A549 (cell line): ENCODE measurements at regions of chr13 and their contacts with region 1.

Region 1: DNA sequence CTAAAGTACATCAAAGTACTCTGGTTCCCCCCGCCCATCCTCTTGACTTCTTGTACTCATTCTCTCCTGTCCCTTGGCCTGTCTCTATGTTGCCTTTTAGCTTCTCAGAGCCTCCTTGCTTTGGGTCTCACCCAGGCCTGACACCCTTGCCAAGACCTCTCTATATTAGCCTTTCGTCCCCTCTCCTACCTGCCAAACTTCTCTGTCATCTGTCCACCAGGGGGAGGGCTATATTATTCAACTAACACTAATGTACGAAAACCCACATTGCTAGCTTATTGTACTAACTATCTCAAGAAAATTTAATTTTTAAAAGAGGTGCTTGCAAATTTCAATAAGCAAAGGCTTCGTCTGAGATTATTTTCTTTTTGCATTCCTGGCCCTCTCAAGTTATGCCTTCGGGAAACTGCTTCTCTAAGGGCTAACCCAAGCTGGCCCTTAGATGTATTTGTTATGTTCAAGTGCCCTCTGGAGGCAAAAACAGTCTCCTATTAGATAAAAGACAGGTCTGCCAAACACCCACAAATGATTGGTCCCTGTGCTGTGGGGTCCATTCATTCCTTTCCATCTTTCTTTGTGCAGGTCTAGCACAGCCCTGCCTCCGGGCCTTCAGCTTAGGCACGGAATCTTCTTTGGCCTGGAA is 6.3 kb upstream of the MRPS31 start:
- DNase-seq: peak; percentile 35 to 64
- ATAC-seq: peak; percentile 94 to 97
- H3K4me3 ChIP-seq: peak overlapping the region; percentile 42; the same call in 2 of the 3 replicates
- H3K27ac ChIP-seq: no peak overlapping the region
- H3K4me1 ChIP-seq: no peaks in the 10 kb centered on the region
- CTCF ChIP-seq: peak; percentile 92
- EP300 ChIP-seq: no peak
- POLR2A ChIP-seq: no peak
- RAD21 ChIP-seq: peak; percentile 70 to 74

Region 2: GRCh38 chr13:39684531-39685137 is 1092.7 kb before region 1 on chr13:
- CTCF ChIA-PET with region 1: interaction called, 14 read pairs
- POLR2A ChIA-PET with region 1: no interaction called
- DNase-seq: peak; percentile 3 to 28
- ATAC-seq: peak in 1 of 2 experiments; percentile 57; a peak in 2 of 6 replicates
- H3K4me3 ChIP-seq: no peak overlapping the region
- H3K27ac ChIP-seq: no peak overlapping the region
- H3K4me1 ChIP-seq: peaks cover 3% of the 10 kb centered on the region; the same call in 1 of the 3 replicates
- CTCF ChIP-seq: peak; percentile 34; the same call in 2 of the 3 replicates
- EP300 ChIP-seq: no peak
- POLR2A ChIP-seq: no peak
- RAD21 ChIP-seq: peak; percentile 25 to 44; a peak in 3 of 5 replicates

Region 3: GRCh38 chr13:40377783-40378182 is 399.5 kb before region 1 on chr13:
- CTCF ChIA-PET with region 1: no interaction called
- POLR2A ChIA-PET with region 1: no interaction called
- DNase-seq: no peak
- ATAC-seq: no peak
- H3K4me3 ChIP-seq: no peak overlapping the region
- H3K27ac ChIP-seq: no peak overlapping the region
- H3K4me1 ChIP-seq: no peaks in the 10 kb centered on the region
- CTCF ChIP-seq: no peak
- EP300 ChIP-seq: no peak
- POLR2A ChIP-seq: no peak
- RAD21 ChIP-seq: no peak

Region 4: GRCh38 chr13:40578055-40578454 is 199.2 kb before region 1 on chr13:
- CTCF ChIA-PET with region 1: no interaction called
- POLR2A ChIA-PET with region 1: no interaction called
- DNase-seq: no peak
- ATAC-seq: no peak
- H3K4me3 ChIP-seq: no peak overlapping the region
- H3K27ac ChIP-seq: no peak overlapping the region
- H3K4me1 ChIP-seq: no peaks in the 10 kb centered on the region
- CTCF ChIP-seq: no peak
- EP300 ChIP-seq: no peak
- POLR2A ChIP-seq: no peak
- RAD21 ChIP-seq: no peak

Region 5: DNA sequence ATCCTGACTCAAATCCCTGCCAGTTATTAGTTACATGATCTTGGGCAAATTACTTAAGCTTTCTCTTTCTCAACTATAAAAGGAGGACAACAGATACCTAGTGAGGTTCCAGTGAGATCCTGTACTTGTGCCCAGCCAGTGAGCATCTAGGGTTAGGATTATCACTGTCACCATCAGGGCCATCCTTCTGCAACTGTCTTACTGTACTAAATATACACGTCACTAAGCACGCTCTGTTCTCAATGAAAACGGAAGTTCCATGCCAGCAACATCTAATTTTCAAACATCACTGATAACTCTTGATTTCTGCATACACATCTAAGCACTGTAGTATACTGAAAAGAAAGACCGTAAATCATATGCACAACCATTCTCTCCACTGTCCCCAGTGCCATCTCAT is 180.8 kb before region 1 on chr13:
- CTCF ChIA-PET with region 1: no interaction called
- POLR2A ChIA-PET with region 1: no interaction called
- DNase-seq: no peak
- ATAC-seq: no peak
- H3K4me3 ChIP-seq: no peak overlapping the region
- H3K27ac ChIP-seq: no peak overlapping the region
- H3K4me1 ChIP-seq: no peaks in the 10 kb centered on the region
- CTCF ChIP-seq: no peak
- EP300 ChIP-seq: no peak
- POLR2A ChIP-seq: no peak
- RAD21 ChIP-seq: no peak

Region 6: DNA sequence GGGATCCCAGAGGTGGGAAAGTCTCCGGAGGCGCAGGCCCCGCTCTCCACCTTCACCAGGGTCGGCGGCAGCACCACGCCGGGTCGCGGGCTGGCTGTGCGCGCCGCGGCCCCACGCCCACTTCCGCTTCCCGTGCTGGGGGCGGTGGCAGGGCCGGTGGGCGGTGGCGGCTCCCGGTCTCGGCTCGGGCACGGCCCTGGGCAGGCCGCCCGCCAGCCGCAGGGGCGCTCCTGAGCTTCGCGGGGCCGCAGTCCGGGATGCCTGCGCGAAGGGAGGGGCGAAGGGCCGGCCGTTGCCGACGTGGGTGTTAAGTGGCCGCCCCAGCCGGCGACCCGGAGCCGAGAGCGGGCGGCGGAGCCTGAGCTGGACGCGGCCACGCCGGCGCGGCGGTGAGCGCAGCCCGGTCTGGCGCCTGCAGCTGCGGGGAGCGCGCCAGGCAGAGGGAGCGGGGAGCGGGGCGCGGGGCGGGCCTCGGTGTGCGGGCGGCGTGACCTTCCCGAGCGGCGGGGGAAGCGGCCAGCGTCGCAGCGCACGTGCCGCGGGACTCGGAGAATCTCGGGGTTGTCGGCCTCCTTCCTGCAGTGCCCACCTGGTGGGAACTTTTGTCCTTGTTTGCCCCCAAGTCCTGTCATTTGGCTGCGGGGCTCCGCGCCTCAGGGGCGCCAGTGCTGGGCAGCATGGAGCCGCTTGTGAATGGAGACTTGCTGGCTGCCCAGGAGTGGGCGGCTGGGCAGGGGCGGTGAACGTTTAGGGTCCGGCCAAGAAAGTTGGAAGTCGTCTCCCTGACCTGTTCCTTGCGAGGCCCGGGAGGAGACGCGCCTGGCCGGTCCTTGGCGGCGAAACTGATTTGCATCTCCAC is 12.2 kb after region 1 on chr13 and contains the start of gene SLC25A15:
- CTCF ChIA-PET with region 1: interaction called, 41 read pairs
- POLR2A ChIA-PET with region 1: no interaction called
- DNase-seq: peak; percentile 58 to 82
- ATAC-seq: peak; percentile 97 to 98
- H3K4me3 ChIP-seq: peak within 1 kb of the TSS; percentile 65
- H3K27ac ChIP-seq: peak within 1 kb of the TSS; percentile 85 to 100
- H3K4me1 ChIP-seq: peaks cover 13% of the 10 kb centered on the region; the same call in 2 of the 3 replicates
- CTCF ChIP-seq: peak; percentile 38
- EP300 ChIP-seq: no peak
- POLR2A ChIP-seq: peak; percentile 60
- RAD21 ChIP-seq: peak; percentile 16 to 41; a peak in 3 of 5 replicates
- polyA plus RNA-seq, gene SLC25A15: 17.8 and 23.3 TPM in 2 replicates

Region 7: DNA sequence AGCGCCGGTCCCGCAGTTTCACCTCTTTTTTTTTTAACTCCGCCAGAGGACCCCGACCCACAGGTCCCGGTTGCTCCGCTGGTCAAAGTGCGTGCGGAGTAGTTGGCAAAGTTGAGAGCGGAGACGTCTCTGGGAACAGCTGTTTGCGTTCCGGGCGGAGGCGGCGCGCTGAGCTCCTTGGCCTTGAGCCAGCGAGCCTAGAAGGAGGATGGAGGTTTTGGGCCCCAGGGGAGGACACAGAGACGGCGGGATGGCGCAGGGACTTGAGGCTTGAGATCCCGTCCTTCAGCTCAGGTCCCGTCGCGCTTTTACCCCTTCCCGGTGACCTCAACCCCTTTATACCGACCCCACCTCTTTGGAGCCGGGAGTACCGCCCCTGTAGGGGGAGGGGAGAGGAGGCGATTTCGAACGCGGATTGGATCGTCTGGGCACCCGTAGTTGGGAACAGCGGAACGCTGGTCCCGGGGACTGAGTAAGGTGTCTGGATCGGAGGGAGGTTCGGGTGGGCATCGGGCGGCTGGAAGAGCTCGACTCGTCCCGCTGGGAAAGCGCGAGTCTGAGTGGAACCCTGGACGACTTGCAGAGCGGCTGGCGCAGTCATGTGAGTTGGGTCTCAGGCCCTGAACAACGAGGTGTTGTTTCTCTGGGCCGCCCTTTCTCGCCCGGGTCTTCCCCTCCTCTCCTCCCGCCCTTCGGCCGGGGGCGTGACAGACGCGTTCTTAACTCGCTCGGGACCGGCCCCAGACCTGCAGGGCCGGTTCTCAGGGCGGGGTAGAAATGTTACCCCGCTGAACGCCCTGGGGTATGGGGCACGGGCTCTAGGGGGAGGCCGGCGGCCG is 284.0 kb after region 1 on chr13 and contains the start of gene WBP4:
- CTCF ChIA-PET with region 1: no interaction called
- POLR2A ChIA-PET with region 1: no interaction called
- DNase-seq: peak; percentile 75 to 95
- ATAC-seq: peak; percentile 80 to 87
- H3K4me3 ChIP-seq: peak within 1 kb of the TSS; percentile 88
- H3K27ac ChIP-seq: peak within 1 kb of the TSS; percentile 97 to 99
- H3K4me1 ChIP-seq: peaks cover 35% of the 10 kb centered on the region; the same call in 2 of the 3 replicates
- CTCF ChIP-seq: no peak
- EP300 ChIP-seq: no peak
- POLR2A ChIP-seq: peak; percentile 80
- RAD21 ChIP-seq: no peak
- polyA plus RNA-seq, gene WBP4: 7.5 and 13.9 TPM in 2 replicates